Activated CD4-positive, alpha-beta T cell treated with anti-CD3 and anti-CD28 coated beads for 36 hours (primary cell): ENCODE measurements at regions of chrX and their contacts with region 1.

Region 1: GRCh38 chrX:31036895-31037294 is 34.9 kb downstream of the FTHL17 start:
- DNase-seq: peak; percentile 30
- ATAC-seq: no peak
- H3K4me3 Mint-ChIP-seq: no peak overlapping the region
- H3K27ac Mint-ChIP-seq: no peak overlapping the region
- H3K4me1 Mint-ChIP-seq: peaks cover 4% of the 10 kb centered on the region
- H3K27me3 Mint-ChIP-seq: peaks cover 3% of the 10 kb centered on the region

Region 2: GRCh38 chrX:31213941-31214340 is 177.0 kb after region 1 on chrX:
- CTCF ChIA-PET with region 1: interaction called, 3 read pairs
- POLR2A ChIA-PET with region 1: no interaction called
- intact Hi-C with region 1: loop called (anchors 5 to 10 kb)
- DNase-seq: peak; percentile 10
- ATAC-seq: no peak
- H3K4me3 Mint-ChIP-seq: no peak overlapping the region
- H3K27ac Mint-ChIP-seq: no peak overlapping the region
- H3K4me1 Mint-ChIP-seq: no peaks in the 10 kb centered on the region
- H3K27me3 Mint-ChIP-seq: no peaks in the 10 kb centered on the region

Region 3: GRCh38 chrX:31293409-31293808 is 256.5 kb after region 1 on chrX:
- CTCF ChIA-PET with region 1: interaction called, 8 read pairs
- POLR2A ChIA-PET with region 1: no interaction called
- intact Hi-C with region 1: loop called (anchors 5 kb)
- DNase-seq: no peak
- ATAC-seq: no peak
- H3K4me3 Mint-ChIP-seq: no peak overlapping the region
- H3K27ac Mint-ChIP-seq: no peak overlapping the region
- H3K4me1 Mint-ChIP-seq: no peaks in the 10 kb centered on the region
- H3K27me3 Mint-ChIP-seq: no peaks in the 10 kb centered on the region

Region 4: GRCh38 chrX:31423609-31424189 is 386.8 kb after region 1 on chrX:
- CTCF ChIA-PET with region 1: no interaction called
- POLR2A ChIA-PET with region 1: no interaction called
- intact Hi-C with region 1: loop called (anchors 5 kb)
- DNase-seq: peak; percentile 33
- ATAC-seq: no peak
- H3K4me3 Mint-ChIP-seq: no peak overlapping the region
- H3K27ac Mint-ChIP-seq: no peak overlapping the region
- H3K4me1 Mint-ChIP-seq: no peaks in the 10 kb centered on the region
- H3K27me3 Mint-ChIP-seq: no peaks in the 10 kb centered on the region

Region 5: DNA sequence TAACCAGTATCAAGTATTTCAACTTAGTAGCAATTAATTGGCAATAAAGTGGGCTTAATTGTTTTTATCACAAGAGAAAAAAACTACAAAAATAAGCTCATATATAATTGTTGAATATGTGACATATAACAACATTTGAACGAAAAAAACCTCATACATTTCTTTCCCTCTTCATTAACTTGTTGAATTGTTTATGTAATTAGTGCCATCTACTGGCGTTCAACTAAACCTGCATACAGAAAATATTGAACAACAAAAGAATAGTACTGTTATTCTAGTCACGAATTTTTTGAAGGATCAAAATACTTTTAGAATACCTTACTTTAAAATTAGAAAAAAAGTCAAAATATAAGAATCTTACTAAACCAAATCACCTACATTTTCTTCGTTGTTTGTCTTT is 621.5 kb after region 1 on chrX:
- CTCF ChIA-PET with region 1: interaction called, 5 read pairs
- POLR2A ChIA-PET with region 1: no interaction called
- intact Hi-C with region 1: loop called (anchors 2 to 5 kb)
- DNase-seq: no peak
- ATAC-seq: no peak
- H3K4me3 Mint-ChIP-seq: no peak overlapping the region
- H3K27ac Mint-ChIP-seq: no peak overlapping the region
- H3K4me1 Mint-ChIP-seq: no peaks in the 10 kb centered on the region
- H3K27me3 Mint-ChIP-seq: no peaks in the 10 kb centered on the region